Activated CD4-positive, alpha-beta memory T cell treated with anti-CD3 and anti-CD28 coated beads for 36 hours (primary cell): ENCODE measurements at regions of chr6 and their contacts with region 1.

Region 1: GRCh38 chr6:52419809-52420670 is at the start of gene EFHC1:
- DNase-seq: peak; percentile 99
- H3K4me3 Mint-ChIP-seq: no peak within 1 kb of the TSS
- H3K27ac Mint-ChIP-seq: no peak within 1 kb of the TSS
- H3K4me1 Mint-ChIP-seq: peaks cover 16% of the 10 kb centered on the region
- H3K27me3 Mint-ChIP-seq: no peaks in the 10 kb centered on the region
- total RNA-seq, gene EFHC1: 1.9 to 3.1 TPM

Region 2: GRCh38 chr6:52233975-52234823 is 185.8 kb before region 1 on chr6:
- CTCF ChIA-PET with region 1: no interaction called
- POLR2A ChIA-PET with region 1: no interaction called
- intact Hi-C with region 1: no loop called
- DNase-seq: peak; percentile 73
- H3K4me3 Mint-ChIP-seq: no peak overlapping the region
- H3K27ac Mint-ChIP-seq: no peak overlapping the region
- H3K4me1 Mint-ChIP-seq: peaks cover 13% of the 10 kb centered on the region
- H3K27me3 Mint-ChIP-seq: peaks cover 39% of the 10 kb centered on the region

Region 3: GRCh38 chr6:52389626-52390360 is 30.2 kb before region 1 on chr6:
- CTCF ChIA-PET with region 1: interaction called, 13 read pairs
- POLR2A ChIA-PET with region 1: no interaction called
- intact Hi-C with region 1: no loop called
- DNase-seq: peak; percentile 74
- H3K4me3 Mint-ChIP-seq: peak overlapping the region; percentile 47
- H3K27ac Mint-ChIP-seq: peak overlapping the region; percentile 76
- H3K4me1 Mint-ChIP-seq: peaks cover 82% of the 10 kb centered on the region
- H3K27me3 Mint-ChIP-seq: no peaks in the 10 kb centered on the region

Region 4: DNA sequence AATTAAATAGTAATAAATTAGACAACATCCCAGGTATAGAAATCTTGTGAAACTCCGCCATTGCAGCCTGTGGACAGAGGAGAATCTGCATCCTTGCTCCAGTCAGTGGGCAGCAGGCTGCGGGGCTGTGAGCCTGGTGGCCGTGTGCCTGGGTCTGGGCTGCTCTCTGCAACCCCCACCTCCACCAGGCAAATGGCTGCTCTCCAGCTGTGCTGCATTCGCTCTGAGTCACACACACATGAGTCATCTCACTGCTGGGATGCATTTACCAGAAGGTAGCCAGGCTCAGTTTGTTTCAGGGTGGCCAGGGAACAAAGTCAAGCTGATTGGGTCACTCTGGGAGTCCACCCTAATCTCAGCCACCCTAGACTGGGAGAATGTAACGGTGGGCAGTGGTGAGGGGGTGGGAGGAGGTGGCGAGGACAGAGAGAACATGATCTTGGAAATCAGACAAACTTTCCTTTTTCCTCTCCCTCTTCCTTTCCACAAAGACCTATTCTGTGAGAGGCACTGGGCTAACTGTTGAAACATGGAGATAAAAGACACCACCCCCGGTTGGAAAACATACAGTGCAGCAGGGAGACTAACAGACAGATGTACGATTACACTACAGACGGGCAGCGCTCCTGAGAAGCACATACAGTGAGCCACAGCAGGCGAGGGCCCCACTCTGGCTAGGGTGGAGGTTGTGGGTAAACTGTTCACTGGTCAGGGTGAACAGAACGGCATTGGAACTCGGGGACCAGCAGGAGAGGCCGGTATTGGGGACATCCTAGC is 97.7 kb after region 1 on chr6:
- CTCF ChIA-PET with region 1: no interaction called
- POLR2A ChIA-PET with region 1: no interaction called
- intact Hi-C with region 1: loop called (anchors 10 kb)
- DNase-seq: peak; percentile 73
- H3K4me3 Mint-ChIP-seq: no peak overlapping the region
- H3K27ac Mint-ChIP-seq: no peak overlapping the region
- H3K4me1 Mint-ChIP-seq: peaks cover 6% of the 10 kb centered on the region
- H3K27me3 Mint-ChIP-seq: no peaks in the 10 kb centered on the region

Region 5: GRCh38 chr6:52598123-52598823 is 178.2 kb after region 1 on chr6:
- CTCF ChIA-PET with region 1: interaction called, 8 read pairs
- POLR2A ChIA-PET with region 1: no interaction called
- intact Hi-C with region 1: loop called (anchors 2 kb)
- DNase-seq: peak; percentile 40
- H3K4me3 Mint-ChIP-seq: no peak overlapping the region
- H3K27ac Mint-ChIP-seq: no peak overlapping the region
- H3K4me1 Mint-ChIP-seq: peaks cover 13% of the 10 kb centered on the region
- H3K27me3 Mint-ChIP-seq: peaks cover 5% of the 10 kb centered on the region

Region 6: DNA sequence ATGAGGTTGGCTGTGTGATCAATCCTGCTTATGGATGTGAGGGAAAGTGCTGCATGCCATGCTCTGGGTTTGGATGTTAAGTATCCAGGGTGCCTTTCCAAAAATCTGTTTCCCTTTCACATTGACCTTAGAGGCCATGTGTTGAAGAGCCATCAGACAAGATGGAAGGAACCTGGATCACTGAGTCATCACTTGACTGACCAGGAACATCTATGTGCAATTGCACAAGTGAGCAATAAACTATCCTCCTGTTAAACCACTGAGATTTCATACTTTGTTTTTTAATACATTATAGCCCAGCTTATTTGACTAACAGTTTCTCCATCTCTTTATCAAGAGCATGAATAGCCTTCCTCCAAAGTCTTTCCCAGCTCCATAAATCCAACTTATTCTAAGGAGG is 233.1 kb after region 1 on chr6:
- CTCF ChIA-PET with region 1: interaction called, 19 read pairs
- POLR2A ChIA-PET with region 1: no interaction called
- intact Hi-C with region 1: loop called (anchors 1 kb)
- DNase-seq: no peak
- H3K4me3 Mint-ChIP-seq: no peak overlapping the region
- H3K27ac Mint-ChIP-seq: no peak overlapping the region
- H3K4me1 Mint-ChIP-seq: peaks cover 3% of the 10 kb centered on the region
- H3K27me3 Mint-ChIP-seq: peaks cover 2% of the 10 kb centered on the region

Region 7: DNA sequence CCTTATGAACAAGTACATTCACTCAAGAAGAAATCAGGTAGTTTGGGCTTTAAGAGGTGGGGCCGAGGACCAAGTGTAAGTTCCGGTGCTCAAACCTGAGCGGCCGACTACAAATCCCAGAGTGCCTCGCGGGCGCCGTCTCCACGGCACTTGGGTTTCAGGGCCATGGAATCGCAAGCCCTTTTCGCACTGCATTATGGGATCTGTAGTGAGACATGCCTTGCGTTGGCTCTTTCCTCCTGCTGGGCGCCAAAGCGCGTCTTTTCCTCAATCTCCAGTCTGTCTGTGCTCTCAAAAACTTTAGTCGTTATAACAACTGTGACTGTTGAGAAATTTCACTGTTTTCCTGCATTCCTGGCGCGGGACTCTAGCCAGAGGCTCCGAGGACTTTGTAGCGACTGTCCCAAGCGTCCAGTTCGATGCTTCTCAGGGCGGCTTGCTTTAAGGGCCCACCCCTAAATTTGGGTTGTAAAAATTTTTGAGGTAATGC is 644.7 kb after region 1 on chr6:
- CTCF ChIA-PET with region 1: interaction called, 3 read pairs
- POLR2A ChIA-PET with region 1: no interaction called
- intact Hi-C with region 1: loop called (anchors 2 kb)
- DNase-seq: peak; percentile 98
- H3K4me3 Mint-ChIP-seq: peak overlapping the region; percentile 100
- H3K27ac Mint-ChIP-seq: peak overlapping the region; percentile 97
- H3K4me1 Mint-ChIP-seq: peaks cover 52% of the 10 kb centered on the region
- H3K27me3 Mint-ChIP-seq: no peaks in the 10 kb centered on the region